CD4-positive, alpha-beta memory T cell (primary cell): ENCODE measurements at regions of chr12 and their contacts with region 1.

Region 1: GRCh38 chr12:104137913-104138796 is at the start of gene NFYB:
- DNase-seq: peak; percentile 95 to 97 (median 95)
- H3K4me3 ChIP-seq: peak within 1 kb of the TSS; percentile 37 to 66
- H3K4me3 Mint-ChIP-seq: peak within 1 kb of the TSS; percentile 90 to 95 (median 94)
- H3K27ac ChIP-seq: peak within 1 kb of the TSS; percentile 75
- H3K27ac Mint-ChIP-seq: peak within 1 kb of the TSS; percentile 85 to 97 (median 92)
- H3K4me1 ChIP-seq: peaks cover 35% of the 10 kb centered on the region
- H3K4me1 Mint-ChIP-seq: peaks cover 12 to 21% (median 16%) of the 10 kb centered on the region in 4 donors
- H3K27me3 ChIP-seq: no peaks in the 10 kb centered on the region
- H3K27me3 Mint-ChIP-seq: peaks cover 0 to 2% of the 10 kb centered on the region in 2 donors
- total RNA-seq, gene NFYB: 29.9 to 32.5 TPM

Region 2: DNA sequence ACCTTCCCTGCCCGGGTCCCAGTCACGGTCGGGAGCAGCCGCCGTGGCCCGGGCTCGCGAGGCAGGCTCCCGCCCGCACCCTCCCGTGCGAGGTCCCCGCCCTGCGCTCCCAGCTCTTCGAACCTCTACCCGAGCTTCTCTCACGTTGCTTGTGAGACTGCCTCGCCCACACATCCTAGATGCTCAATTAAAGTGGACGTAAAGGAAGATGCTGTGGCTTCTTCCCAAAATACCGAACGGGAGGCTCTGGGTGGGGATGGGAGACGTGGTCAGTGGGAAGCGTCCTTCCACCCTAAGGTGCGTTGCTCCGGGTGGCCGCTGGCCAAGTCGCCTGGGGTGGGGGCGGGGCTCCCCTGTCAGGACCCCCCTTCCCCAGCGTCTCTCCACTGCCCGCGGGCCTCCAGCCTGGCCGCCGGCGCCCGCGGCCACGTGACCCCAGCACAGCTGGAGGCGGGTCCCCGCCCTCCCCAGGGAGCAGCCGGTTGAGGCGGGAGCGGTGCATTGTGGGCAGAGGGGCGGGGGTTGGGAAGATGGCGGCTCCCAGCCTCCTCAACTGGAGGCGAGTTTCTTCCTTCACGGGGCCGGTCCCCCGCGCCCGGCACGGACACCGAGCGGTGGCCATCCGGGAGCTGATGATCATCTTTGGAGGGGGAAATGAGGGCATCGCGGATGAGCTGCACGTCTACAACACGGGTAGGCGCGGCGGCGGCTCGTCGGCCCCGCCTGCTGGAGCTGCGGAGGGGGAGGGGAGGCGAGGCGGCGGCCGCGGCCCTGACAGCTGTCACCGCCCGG is 73.9 kb before region 1 on chr12 and contains the start of gene HCFC2:
- CTCF ChIA-PET with region 1: no interaction called
- POLR2A ChIA-PET with region 1: interaction called, 21 read pairs
- intact Hi-C with region 1: loop called (anchors 1 kb)
- DNase-seq: peak; percentile 83 to 91 (median 86)
- H3K4me3 ChIP-seq: peak within 1 kb of the TSS; percentile 91 to 98
- H3K4me3 Mint-ChIP-seq: peak within 1 kb of the TSS; percentile 91 to 97 (median 94)
- H3K27ac ChIP-seq: peak within 1 kb of the TSS; percentile 77
- H3K27ac Mint-ChIP-seq: peak within 1 kb of the TSS; percentile 85 to 95 (median 92)
- H3K4me1 ChIP-seq: peaks cover 21% of the 10 kb centered on the region
- H3K4me1 Mint-ChIP-seq: peaks cover 18 to 35% (median 23%) of the 10 kb centered on the region in 4 donors
- H3K27me3 ChIP-seq: peaks cover 5% of the 10 kb centered on the region
- H3K27me3 Mint-ChIP-seq: peaks cover 4 to 5% of the 10 kb centered on the region in 2 donors
- total RNA-seq, gene HCFC2: 18.1 to 18.5 TPM

Region 3: GRCh38 chr12:104286538-104287482 is 148.7 kb after region 1 on chr12:
- CTCF ChIA-PET with region 1: interaction called, 3 read pairs
- POLR2A ChIA-PET with region 1: interaction called, 26 read pairs
- intact Hi-C with region 1: no loop called
- DNase-seq: peak; percentile 87 to 94 (median 88)
- H3K4me3 ChIP-seq: peak overlapping the region; percentile 80 to 96
- H3K4me3 Mint-ChIP-seq: peak overlapping the region; percentile 94 to 100 (median 99)
- H3K27ac ChIP-seq: peak overlapping the region; percentile 82
- H3K27ac Mint-ChIP-seq: peak overlapping the region; percentile 94 to 99 (median 96)
- H3K4me1 ChIP-seq: peaks cover 35% of the 10 kb centered on the region
- H3K4me1 Mint-ChIP-seq: peaks cover 23 to 41% (median 30%) of the 10 kb centered on the region in 4 donors
- H3K27me3 ChIP-seq: no peaks in the 10 kb centered on the region
- H3K27me3 Mint-ChIP-seq: peaks cover 0 to 2% of the 10 kb centered on the region in 2 donors